ENCODE measurements at regions of chr20 and their contacts with region 1.

Region 1: GRCh38 chr20:17854307-17854903 is 114.2 kb downstream of the SNX5 start:
- DNase-seq: peak; percentile 46 to 73 (median 66)
- H3K4me3 ChIP-seq: no peak overlapping the region
- H3K27ac ChIP-seq: no peak overlapping the region
- H3K4me1 ChIP-seq: peaks cover 9% of the 10 kb centered on the region
- H3K27me3 ChIP-seq: no peaks in the 10 kb centered on the region
- CTCF ChIP-seq: no peak
- EP300 ChIP-seq: no peak
- POLR2A ChIP-seq: no peak

Region 2: DNA sequence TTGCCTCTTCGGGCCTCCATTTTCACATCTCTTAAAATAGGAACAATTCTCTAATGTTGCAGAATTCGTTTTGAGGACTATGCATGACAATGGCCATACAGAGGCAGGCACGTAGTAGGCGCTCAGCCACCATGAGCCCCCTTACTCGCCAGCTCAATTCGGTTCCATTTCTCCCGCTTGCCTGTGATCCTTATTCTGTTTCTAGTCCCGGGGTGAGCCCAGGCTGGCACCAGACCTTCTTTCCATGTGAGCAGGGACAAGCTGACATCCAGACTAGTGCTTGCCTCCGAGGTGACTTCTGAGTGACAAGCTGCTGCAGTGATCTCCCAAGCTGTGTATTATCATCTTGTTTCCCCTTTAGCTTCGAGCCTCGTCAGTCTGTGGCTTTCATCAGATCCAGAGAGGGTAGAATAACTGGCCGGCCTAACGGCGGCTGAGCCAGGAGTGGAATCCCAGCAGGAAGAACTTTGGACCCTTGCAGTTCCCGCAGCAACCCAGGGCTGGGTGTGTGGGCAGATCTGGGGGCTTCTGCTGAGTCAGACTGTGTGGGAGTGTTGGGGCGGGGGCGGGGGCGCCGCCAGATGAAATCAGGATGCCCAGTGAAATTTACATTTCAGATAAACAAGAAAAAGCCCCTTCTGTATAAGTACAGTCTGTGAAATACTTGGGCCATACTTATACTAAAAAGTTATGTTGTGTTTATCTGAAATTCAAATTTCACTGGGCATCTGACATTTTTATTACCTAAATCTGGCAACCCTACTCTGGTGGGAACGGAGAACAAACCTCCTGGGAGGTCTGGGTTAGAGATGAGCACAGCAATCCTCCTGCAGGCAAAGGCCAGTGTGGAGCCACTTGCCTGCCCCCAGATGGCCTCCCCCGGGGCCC is 143.8 kb before region 1 on chr20:
- intact Hi-C with region 1: no loop called
- DNase-seq: no peak
- H3K4me3 ChIP-seq: no peak overlapping the region
- H3K27ac ChIP-seq: no peak overlapping the region
- H3K4me1 ChIP-seq: peaks cover 7% of the 10 kb centered on the region
- H3K27me3 ChIP-seq: no peaks in the 10 kb centered on the region
- CTCF ChIP-seq: no peak
- EP300 ChIP-seq: no peak
- POLR2A ChIP-seq: no peak

Region 3: GRCh38 chr20:17806739-17807441 is 47.5 kb before region 1 on chr20:
- intact Hi-C with region 1: loop called in 1 of 4 experiments (anchors 5 kb)
- DNase-seq: peak; percentile 91 to 95 (median 92)
- H3K4me3 ChIP-seq: no peak overlapping the region
- H3K27ac ChIP-seq: peak overlapping the region; percentile 70 to 92
- H3K4me1 ChIP-seq: peaks cover 15% of the 10 kb centered on the region
- H3K27me3 ChIP-seq: no peaks in the 10 kb centered on the region
- CTCF ChIP-seq: no peak
- EP300 ChIP-seq: no peak
- POLR2A ChIP-seq: peak; percentile 6